Mammary epithelial cell (primary cell): ENCODE measurements at regions of chr12 and their contacts with region 1.

Region 1: DNA sequence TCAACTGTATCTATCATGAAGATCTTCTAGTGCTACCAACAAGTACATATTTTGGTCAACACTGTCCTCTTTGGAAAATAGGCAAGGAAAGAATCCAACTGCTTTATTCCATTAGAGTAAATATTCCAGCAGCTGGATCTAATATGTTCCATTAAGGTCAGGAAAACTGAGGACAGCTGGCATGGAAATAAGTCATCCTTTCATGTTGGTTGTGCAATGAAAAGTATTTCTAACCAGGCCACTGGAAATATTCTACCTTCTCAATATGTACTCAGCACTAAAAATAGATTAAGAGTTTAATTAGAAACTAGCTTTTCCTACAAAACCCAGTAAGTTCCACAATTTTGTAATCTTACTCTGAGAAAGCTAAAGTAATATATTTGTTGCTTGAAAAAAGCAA is 19.6 kb downstream of the HIGD1C start:
- DNase-seq: no peak
- H3K4me3 ChIP-seq: no peak overlapping the region
- H3K27ac ChIP-seq: no peak overlapping the region
- H3K4me1 ChIP-seq: no peaks in the 10 kb centered on the region
- H3K27me3 ChIP-seq: no peaks in the 10 kb centered on the region
- CTCF ChIP-seq: no peak

Region 2: DNA sequence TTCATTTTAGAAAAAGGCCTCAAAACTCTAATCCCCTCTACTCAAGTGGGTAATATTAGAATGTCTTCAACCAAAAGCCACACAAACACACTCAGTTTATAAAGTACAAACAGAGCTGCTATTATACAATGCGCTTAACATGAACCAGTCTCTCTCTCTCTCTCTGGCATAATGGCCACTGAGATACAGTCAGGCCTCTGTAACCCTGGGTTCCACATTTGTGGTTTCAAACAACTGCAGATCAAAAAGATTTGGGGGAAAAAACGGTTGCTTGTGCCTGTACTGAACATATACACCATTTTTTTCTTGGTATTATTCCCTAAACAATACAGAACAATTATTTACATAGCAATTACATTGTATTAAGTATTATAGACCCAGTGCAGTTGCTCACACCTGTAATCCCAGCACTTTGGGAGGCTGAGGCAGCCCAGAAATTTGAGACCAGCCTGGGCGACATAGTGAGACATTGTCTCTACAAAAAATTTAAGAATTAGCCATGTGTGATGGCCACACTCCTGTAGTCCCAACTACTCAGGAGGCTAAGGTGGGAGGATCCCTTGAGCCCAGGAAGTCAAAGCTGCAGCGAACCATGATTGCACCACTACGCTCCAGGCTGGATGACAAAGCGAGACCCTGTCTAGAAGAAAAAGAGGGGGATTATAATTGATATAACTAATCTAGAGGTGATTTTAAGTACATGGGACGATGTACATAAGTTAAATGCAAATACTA is 48.7 kb after region 1 on chr12:
- CTCF ChIA-PET with region 1: no interaction called
- dilution Hi-C with region 1: loop called (anchors 5 kb)
- in situ Hi-C with region 1: no loop called
- intact Hi-C with region 1: no loop called
- DNase-seq: no peak
- H3K4me3 ChIP-seq: no peak overlapping the region
- H3K27ac ChIP-seq: no peak overlapping the region
- H3K4me1 ChIP-seq: peaks cover 16% of the 10 kb centered on the region
- H3K27me3 ChIP-seq: no peaks in the 10 kb centered on the region
- CTCF ChIP-seq: no peak

Region 3: GRCh38 chr12:51403681-51404136 is 431.8 kb after region 1 on chr12:
- CTCF ChIA-PET with region 1: no interaction called
- dilution Hi-C with region 1: no loop called
- in situ Hi-C with region 1: no loop called
- intact Hi-C with region 1: no loop called
- DNase-seq: no peak
- H3K4me3 ChIP-seq: no peak overlapping the region
- H3K27ac ChIP-seq: no peak overlapping the region
- H3K4me1 ChIP-seq: no peaks in the 10 kb centered on the region
- H3K27me3 ChIP-seq: no peaks in the 10 kb centered on the region
- CTCF ChIP-seq: no peak